Psoas muscle (tissue), 8 donors: ENCODE measurements at regions of chr5 and their contacts with region 1.

Region 1: DNA sequence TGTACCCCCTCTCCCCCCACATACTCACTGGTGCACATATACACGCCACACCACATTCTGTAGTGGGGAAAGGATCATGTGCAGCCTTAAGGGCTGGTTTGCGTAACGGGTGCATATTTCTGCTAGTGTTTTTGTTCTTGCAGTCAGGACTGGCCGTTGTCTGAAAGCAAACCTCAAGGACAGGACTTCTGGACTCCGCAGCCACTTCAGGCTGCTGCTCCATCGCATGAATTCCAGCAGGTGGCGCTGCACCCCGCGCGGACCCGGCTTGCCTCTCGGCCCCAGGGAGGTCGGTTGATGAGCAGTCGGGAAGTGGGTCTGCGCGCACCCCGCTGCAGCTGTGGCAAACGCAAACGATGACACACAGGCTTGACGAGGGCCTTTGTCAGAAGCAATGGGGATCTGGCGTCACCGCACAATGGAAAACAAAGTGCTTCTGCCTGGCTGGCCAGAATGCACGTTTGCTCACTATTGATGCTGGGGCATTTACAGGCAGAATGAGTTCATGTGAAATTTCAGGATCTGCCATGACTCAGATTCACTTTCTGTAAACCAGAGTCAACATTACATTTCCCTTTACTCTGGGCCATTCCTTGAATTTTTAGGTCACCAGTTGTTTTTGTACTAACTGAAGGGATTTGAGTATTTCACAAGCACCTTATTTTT is 36.3 kb upstream of the GLRX start:
- DNase-seq: peak; percentile 92 to 96
- ATAC-seq: peak; percentile 69 to 80 (median 78)
- H3K4me3 ChIP-seq: peak overlapping the region; percentile 30
- H3K27ac ChIP-seq: peak overlapping the region; percentile 87
- H3K4me1 ChIP-seq: peaks cover 65% of the 10 kb centered on the region
- H3K27me3 ChIP-seq: no peaks in the 10 kb centered on the region
- CTCF ChIP-seq: peak; percentile 97

Region 2: GRCh38 chr5:95554647-95555548 is 303.9 kb before region 1 on chr5 and contains the starts of genes ARSK and SKIC3:
- intact Hi-C with region 1: loop called in 1 of 2 experiments (anchors 5 kb)
- DNase-seq: peak; percentile 95 to 97
- ATAC-seq: peak; percentile 96 to 98 (median 96)
- H3K4me3 ChIP-seq: peak within 1 kb of the TSS; percentile 75
- H3K27ac ChIP-seq: peak within 1 kb of the TSS; percentile 79
- H3K4me1 ChIP-seq: peaks cover 14% of the 10 kb centered on the region
- H3K27me3 ChIP-seq: no peaks in the 10 kb centered on the region
- CTCF ChIP-seq: peak; percentile 35
- total RNA-seq, gene ARSK: 1.6 to 2.4 (median 1.9) TPM
- total RNA-seq, gene SKIC3: 44.4 to 71.2 (median 50.9) TPM

Region 3: DNA sequence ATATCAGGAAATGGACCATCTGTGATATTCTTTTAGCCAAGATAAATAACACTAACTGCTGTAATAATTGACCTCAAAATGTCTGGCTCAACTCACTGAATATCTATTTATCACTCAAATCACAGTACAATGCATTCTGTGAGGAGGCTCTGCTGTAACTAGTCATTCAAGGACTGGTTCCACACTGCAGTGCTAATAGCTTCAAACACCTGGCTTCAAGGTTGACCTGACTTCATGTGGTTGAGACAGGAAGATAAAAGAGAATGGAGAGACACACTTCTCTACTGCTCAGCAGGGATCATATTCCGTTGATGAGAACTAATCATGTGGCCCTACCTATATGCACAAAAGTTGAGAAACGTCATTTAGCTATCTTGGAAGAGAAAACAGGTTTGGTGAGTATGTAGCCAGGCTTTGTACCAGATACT is 131.0 kb before region 1 on chr5:
- intact Hi-C with region 1: no loop called
- DNase-seq: no peak
- ATAC-seq: no peak
- H3K4me3 ChIP-seq: no peak overlapping the region
- H3K27ac ChIP-seq: peak overlapping the region; percentile 25
- H3K4me1 ChIP-seq: peaks cover 28% of the 10 kb centered on the region
- H3K27me3 ChIP-seq: no peaks in the 10 kb centered on the region
- CTCF ChIP-seq: no peak

Region 4: DNA sequence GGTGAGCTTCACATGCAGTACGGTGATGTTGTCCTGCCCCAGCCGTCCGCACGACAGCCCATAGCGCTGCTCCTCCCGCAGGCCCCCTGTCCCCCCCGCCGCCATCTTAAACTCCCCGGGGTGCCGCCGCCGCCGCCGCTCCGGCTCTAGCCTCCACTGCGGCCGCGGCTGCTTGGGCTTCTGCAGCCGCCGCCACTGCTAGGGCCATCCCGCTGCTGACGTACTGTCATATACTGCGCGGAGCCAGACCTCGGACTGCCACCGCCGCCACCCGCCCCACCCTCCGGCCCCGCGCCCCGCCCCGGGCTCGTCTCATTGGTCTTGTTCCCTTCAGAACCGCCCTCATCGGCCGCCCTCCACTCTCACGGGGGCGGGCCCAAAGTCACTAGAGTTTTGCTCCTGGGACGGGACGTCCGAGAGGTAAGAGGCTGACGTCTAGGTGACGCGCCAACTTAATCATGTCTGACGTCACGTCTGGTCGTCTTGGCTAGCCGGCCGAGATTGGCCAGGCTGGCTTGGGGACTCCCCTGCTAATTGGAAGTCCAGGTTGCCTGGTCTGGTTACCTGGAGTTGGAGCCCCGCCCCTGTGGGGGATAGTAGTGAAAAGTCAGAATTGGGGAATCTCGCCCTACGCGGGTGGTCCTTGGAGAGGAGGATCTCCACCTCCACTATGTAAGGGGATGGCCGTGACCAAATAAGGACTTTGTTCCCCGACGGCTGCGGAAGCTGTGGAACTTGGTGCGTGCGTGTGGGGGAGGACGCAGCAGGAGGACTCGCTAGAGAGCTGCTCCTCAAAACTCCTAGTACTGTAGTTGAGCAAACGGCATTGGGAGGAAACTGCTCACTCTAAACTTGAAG is 103.1 kb after region 1 on chr5 and contains the start of gene ELL2:
- intact Hi-C with region 1: loop called (anchors 1 to 2 kb)
- DNase-seq: peak; percentile 98 to 99
- ATAC-seq: peak; percentile 87 to 90 (median 89)
- H3K4me3 ChIP-seq: peak within 1 kb of the TSS; percentile 94
- H3K27ac ChIP-seq: peak within 1 kb of the TSS; percentile 95
- H3K4me1 ChIP-seq: peaks cover 18% of the 10 kb centered on the region
- H3K27me3 ChIP-seq: no peaks in the 10 kb centered on the region
- CTCF ChIP-seq: no peak
- total RNA-seq, gene ELL2: 16.2 to 59.8 (median 32.1) TPM

Region 5: GRCh38 chr5:96256778-96257470 is 398.1 kb after region 1 on chr5:
- intact Hi-C with region 1: loop called in 1 of 2 experiments (anchors 10 kb)
- DNase-seq: peak in 1 of 2 donors; percentile 17
- ATAC-seq: peak in 1 of 4 donors; percentile 42
- H3K4me3 ChIP-seq: no peak overlapping the region
- H3K27ac ChIP-seq: no peak overlapping the region
- H3K4me1 ChIP-seq: peaks cover 8% of the 10 kb centered on the region
- H3K27me3 ChIP-seq: no peaks in the 10 kb centered on the region
- CTCF ChIP-seq: no peak

Region 6: GRCh38 chr5:96336351-96336985 is 477.7 kb after region 1 on chr5:
- intact Hi-C with region 1: loop called (anchors 2 kb)
- DNase-seq: peak in 1 of 2 donors; percentile 21
- ATAC-seq: peak; percentile 73 to 79 (median 76)
- H3K4me3 ChIP-seq: peak overlapping the region; percentile 35
- H3K27ac ChIP-seq: peak overlapping the region; percentile 85
- H3K4me1 ChIP-seq: peaks cover 40% of the 10 kb centered on the region
- H3K27me3 ChIP-seq: no peaks in the 10 kb centered on the region
- CTCF ChIP-seq: peak; percentile 92

Region 7: DNA sequence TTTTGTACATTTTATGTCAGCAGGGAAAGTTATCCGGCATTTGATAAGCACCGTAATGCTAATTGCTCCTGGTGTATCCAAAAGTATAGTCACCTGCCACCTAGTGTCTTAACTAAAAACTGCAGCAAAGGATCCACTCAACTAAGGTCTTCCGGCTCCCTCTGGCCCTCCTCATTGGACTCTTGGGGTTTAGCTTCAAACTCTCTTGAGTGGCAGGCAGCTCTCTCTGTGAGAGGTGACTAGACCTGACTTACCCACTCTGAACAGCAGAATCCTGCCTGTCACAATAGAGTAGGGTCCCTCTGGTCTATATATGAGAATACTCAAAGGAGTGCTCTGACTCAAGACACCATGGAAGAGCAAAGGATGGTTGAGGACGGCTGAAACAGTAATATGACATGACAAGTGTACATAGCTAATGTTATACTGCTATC is 743.0 kb after region 1 on chr5:
- intact Hi-C with region 1: loop called (anchors 5 to 10 kb)
- DNase-seq: no peak
- ATAC-seq: peak; percentile 67 to 96 (median 86)
- H3K4me3 ChIP-seq: no peak overlapping the region
- H3K27ac ChIP-seq: no peak overlapping the region
- H3K4me1 ChIP-seq: no peaks in the 10 kb centered on the region
- H3K27me3 ChIP-seq: no peaks in the 10 kb centered on the region
- CTCF ChIP-seq: peak; percentile 90